ENCODE measurements at regions of chr1 and their contacts with region 1.

Region 1: DNA sequence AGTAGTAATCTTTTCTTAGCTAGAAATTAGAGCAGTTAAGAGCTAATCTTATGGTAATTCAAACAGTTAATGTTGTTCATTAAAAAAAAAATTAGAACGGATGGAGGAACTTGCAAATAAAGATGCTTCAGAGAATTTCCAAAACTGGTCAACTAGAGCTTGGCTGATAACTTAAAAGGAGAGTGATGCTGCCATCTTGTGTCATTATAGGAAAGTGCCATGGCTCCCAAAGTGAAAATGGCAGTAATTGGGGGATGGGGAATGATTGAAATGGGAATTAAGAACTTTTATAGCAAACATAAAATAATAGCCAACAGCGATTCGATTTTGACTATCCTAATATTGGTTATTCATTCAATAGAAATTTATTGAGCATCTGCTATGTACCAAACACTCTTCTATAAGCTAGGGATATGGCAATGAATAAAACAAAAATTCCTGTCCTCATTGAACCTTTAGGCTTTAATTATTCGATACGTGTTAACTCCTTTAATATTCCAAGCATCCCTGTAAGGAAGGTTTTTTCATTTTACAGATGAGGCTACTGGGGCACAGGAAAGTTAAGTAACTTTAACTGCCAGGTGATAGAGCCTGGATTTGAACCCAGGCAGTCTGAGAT is 5.7 kb upstream of the PLPP3 start:
- DNase-seq: peak; percentile 67
- H3K4me3 ChIP-seq: no peak overlapping the region
- H3K27ac ChIP-seq: no peak overlapping the region
- H3K4me1 ChIP-seq: peaks cover 2% of the 10 kb centered on the region
- H3K27me3 ChIP-seq: no peaks in the 10 kb centered on the region
- CTCF ChIP-seq: peak; percentile 61 to 65
- POLR2A ChIP-seq: no peak

Region 2: DNA sequence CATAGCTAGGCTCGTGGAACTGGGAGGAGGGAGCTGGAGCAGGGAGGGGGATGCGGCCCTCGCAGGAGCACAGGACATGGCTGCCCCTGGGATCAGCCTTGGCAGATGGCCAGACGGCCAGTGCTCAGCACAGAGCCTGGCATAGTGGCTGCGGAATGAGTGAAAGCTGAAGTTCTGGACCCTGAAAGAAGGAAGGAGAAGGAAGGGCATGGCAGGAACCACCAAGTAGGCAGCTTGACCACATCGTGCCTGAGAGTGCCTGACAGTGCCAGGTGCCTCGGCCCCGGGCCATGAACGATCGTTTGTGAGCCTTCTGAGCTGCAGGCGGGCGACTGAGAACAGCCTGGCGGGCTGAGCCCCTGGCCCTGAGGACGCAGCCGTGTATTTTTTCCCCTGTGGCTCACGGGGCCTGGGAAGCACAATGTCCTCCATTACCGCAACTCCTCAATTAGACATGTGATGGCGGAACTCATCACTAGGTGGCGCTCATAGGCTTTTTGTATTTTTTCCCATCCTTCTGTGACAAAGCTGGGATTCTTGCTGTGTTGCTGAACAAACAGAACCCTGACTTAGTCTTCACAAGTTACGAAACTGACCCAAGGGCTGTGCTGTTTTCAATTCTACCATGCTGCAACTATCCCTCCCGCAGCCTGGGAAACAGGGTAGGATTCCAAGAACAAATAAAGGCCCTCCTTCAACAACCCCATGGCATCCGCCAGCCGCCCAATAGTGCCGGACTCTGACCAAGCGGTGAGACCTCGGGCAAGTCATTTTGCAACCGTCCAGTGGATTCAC is 1634.5 kb before region 1 on chr1:
- CTCF ChIA-PET with region 1: interaction called, 7 read pairs
- POLR2A ChIA-PET with region 1: no interaction called
- dilution Hi-C with region 1: no loop called
- intact Hi-C with region 1: loop called (anchors 1 kb)
- DNase-seq: peak; percentile 87
- H3K4me3 ChIP-seq: no peak overlapping the region
- H3K27ac ChIP-seq: peak overlapping the region; percentile 15
- H3K4me1 ChIP-seq: peaks cover 25% of the 10 kb centered on the region
- H3K27me3 ChIP-seq: peaks cover 0 to 1% of the 10 kb centered on the region in 2 experiments
- CTCF ChIP-seq: peak; percentile 71 to 79
- POLR2A ChIP-seq: no peak

Region 3: DNA sequence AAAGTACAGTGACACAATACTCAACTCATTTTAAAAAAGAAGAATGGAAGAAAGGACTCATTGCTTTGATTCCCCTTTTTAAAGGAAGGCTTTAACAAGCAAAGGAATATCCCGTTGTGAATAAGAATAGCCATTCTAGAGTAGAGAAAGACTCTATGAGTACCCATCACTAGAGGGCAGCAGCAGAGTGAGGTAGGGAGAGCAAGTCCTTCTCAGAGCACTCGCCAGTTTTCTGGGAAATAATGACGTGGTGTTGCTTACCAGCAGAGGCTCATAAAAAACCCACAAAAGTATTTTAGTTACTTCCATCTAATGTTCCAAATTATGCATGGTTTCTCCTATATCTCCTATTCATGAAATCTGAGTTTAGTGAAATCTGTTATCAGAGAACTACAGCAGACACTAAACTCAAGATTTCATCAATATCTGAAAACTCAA is 1444.5 kb before region 1 on chr1:
- CTCF ChIA-PET with region 1: interaction called, 3 read pairs
- POLR2A ChIA-PET with region 1: no interaction called
- dilution Hi-C with region 1: no loop called
- intact Hi-C with region 1: loop called (anchors 1 kb)
- DNase-seq: peak; percentile 82
- H3K4me3 ChIP-seq: no peak overlapping the region
- H3K27ac ChIP-seq: no peak overlapping the region
- H3K4me1 ChIP-seq: peaks cover 7% of the 10 kb centered on the region
- H3K27me3 ChIP-seq: no peaks in the 10 kb centered on the region
- CTCF ChIP-seq: peak; percentile 67 to 76
- POLR2A ChIP-seq: no peak

Region 4: GRCh38 chr1:55284852-55285251 is 1300.2 kb before region 1 on chr1:
- CTCF ChIA-PET with region 1: interaction called, 99 read pairs
- POLR2A ChIA-PET with region 1: no interaction called
- dilution Hi-C with region 1: no loop called
- intact Hi-C with region 1: loop called (anchors 1 kb)
- DNase-seq: peak; percentile 64
- H3K4me3 ChIP-seq: no peak overlapping the region
- H3K27ac ChIP-seq: no peak overlapping the region
- H3K4me1 ChIP-seq: peaks cover 12% of the 10 kb centered on the region
- H3K27me3 ChIP-seq: no peaks in the 10 kb centered on the region
- CTCF ChIP-seq: peak; percentile 56 to 59
- POLR2A ChIP-seq: no peak

Region 5: DNA sequence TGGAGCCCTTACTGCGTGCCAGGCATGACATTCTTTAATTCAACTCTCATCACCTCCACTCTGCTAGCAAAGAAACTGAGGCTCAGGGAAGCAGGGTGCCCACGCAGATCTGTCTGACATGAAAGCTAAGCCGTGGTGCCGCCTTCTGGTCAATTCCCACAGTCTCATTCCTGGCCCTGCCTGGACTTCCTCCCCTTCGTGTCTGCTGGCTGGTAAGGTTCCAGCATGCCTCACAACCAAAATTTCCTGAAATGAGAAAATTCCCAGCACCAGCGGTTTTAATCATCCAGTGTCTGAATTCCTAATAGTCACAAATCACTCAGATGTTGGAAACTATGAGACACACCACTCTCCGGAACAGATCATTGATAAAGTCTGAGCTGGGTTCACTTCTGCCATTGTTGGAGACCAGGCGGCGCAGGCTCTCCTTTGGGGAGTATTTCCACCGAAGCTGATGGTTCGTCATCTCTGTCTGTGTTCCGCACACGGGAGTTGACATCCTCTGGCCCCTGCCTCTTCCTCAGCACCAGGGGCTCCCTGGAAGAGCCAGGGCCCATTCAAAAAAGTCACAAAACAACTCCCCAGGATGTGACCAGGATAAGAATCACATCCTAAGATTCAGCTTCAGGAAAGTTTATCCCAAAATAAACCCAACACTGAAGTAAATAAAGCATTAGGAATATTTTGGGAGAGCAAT is 173.4 kb before region 1 on chr1:
- CTCF ChIA-PET with region 1: interaction called, 16 read pairs
- POLR2A ChIA-PET with region 1: no interaction called
- dilution Hi-C with region 1: no loop called
- intact Hi-C with region 1: no loop called
- DNase-seq: peak; percentile 95
- H3K4me3 ChIP-seq: no peak overlapping the region
- H3K27ac ChIP-seq: peak overlapping the region; percentile 49
- H3K4me1 ChIP-seq: peaks cover 19% of the 10 kb centered on the region
- H3K27me3 ChIP-seq: no peaks in the 10 kb centered on the region
- CTCF ChIP-seq: peak; percentile 38 to 60
- POLR2A ChIP-seq: no peak